Activated naive CD4-positive, alpha-beta T cell treated with anti-CD3 and anti-CD28 coated beads for 36 hours (primary cell): ENCODE measurements at regions of chr16 and their contacts with region 1.

Region 1: DNA sequence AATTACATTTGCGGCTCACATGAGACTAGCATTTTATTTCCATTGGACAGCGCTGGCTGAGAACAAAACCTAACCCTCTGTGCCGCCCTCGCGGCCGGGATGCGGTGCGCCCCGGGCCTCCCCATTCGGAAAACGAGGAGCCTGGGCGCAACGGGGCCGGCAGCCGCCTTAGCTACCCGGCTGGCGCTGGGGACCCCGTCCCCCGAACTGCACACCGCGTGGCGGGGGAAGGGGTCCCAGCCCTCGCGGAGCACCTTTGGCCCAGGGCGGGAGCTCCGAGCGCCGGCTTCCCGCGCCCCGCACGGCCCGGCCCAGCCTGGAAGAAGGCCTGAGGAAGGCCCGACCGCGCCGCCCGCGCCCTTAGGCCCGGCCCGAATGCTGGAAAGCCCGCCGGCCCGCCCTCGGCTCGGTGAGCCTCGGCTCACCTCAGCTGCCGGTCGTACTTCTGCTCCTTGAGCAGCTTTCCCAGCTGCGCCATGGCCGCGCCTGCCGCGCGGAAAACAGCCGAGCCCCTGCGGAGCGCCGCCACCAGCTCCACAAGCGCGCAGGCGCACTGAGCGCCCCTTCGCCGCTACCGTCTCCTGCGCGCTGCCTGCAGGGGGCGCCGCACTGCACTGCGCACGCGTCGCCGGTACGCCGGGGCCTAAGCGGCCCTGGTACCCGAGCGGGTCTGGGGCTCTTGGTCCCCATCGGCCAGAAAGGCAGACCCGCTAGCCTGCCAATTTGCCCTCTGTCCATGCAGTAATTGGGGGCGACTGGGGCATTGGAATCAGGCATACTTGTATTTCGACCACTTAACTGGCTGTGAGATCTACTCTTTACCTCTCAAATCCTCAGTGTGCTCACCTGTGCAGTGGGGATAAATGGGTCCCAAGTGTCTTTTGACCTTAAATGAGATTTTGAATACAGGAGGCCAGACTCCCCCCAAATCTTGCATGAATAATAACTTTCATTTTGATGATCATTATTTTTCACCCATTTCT is at the start of gene NAE1:
- DNase-seq: peak; percentile 87
- H3K4me3 Mint-ChIP-seq: peak within 1 kb of the TSS; percentile 74
- H3K27ac Mint-ChIP-seq: no peak within 1 kb of the TSS
- H3K4me1 Mint-ChIP-seq: peaks cover 32% of the 10 kb centered on the region
- H3K27me3 Mint-ChIP-seq: no peaks in the 10 kb centered on the region
- total RNA-seq, gene NAE1: 108 to 115 TPM

Region 2: GRCh38 chr16:66199189-66199588 is 631.5 kb before region 1 on chr16:
- CTCF ChIA-PET with region 1: no interaction called
- intact Hi-C with region 1: no loop called
- DNase-seq: no peak
- H3K4me3 Mint-ChIP-seq: no peak overlapping the region
- H3K27ac Mint-ChIP-seq: no peak overlapping the region
- H3K4me1 Mint-ChIP-seq: no peaks in the 10 kb centered on the region
- H3K27me3 Mint-ChIP-seq: no peaks in the 10 kb centered on the region

Region 3: GRCh38 chr16:66751303-66751991 is 79.3 kb before region 1 on chr16 and contains the start of gene DYNC1LI2:
- CTCF ChIA-PET with region 1: interaction called, 6 read pairs
- intact Hi-C with region 1: loop called (anchors 1 kb)
- DNase-seq: peak; percentile 82
- H3K4me3 Mint-ChIP-seq: peak within 1 kb of the TSS; percentile 88
- H3K27ac Mint-ChIP-seq: peak within 1 kb of the TSS; percentile 78
- H3K4me1 Mint-ChIP-seq: peaks cover 36% of the 10 kb centered on the region
- H3K27me3 Mint-ChIP-seq: peaks cover 3% of the 10 kb centered on the region
- total RNA-seq, gene DYNC1LI2: 30.8 to 31.0 TPM

Region 4: GRCh38 chr16:66844342-66845079 is 13.8 kb after region 1 on chr16 and contains the start of gene CA7:
- CTCF ChIA-PET with region 1: interaction called, 50 read pairs
- intact Hi-C with region 1: no loop called
- DNase-seq: no peak
- H3K4me3 Mint-ChIP-seq: peak within 1 kb of the TSS; percentile 39
- H3K27ac Mint-ChIP-seq: no peak within 1 kb of the TSS
- H3K4me1 Mint-ChIP-seq: peaks cover 5% of the 10 kb centered on the region
- H3K27me3 Mint-ChIP-seq: peaks cover 32% of the 10 kb centered on the region
- total RNA-seq, gene CA7: not detected

Region 5: DNA sequence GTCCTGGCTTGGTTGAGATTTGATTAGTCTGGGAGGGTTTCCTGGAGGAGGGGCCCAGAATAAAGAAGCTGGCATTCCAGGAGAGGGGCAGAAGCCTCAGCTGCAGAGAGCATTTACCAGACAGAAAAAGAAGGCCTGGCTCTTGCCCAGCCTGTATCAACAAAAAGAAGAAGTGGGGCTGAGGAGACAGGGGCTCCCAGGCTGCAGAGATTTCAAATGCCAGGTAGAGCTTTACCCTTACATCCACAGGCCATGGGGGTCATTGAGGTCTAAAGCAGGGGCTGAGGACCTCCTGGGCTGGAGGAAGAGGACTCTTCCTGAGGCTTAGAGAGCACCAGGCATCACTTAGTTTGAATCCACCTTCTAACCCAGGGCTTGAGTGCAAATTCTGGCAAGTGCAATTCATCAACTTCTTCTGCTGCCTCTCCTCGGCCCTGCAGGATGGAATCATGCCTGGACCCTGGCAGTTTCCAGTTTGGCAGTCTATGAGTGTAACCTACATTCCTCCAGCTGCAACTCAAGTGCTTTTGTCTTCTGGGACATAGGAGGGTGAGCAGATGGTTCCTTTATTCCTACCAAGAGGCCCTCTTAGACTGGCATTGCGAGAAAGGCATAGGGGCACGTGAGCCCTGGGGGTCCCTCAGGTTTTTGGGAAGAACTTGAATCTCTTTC is 28.8 kb after region 1 on chr16:
- CTCF ChIA-PET with region 1: interaction called, 19 read pairs
- intact Hi-C with region 1: no loop called
- DNase-seq: no peak
- H3K4me3 Mint-ChIP-seq: no peak overlapping the region
- H3K27ac Mint-ChIP-seq: no peak overlapping the region
- H3K4me1 Mint-ChIP-seq: no peaks in the 10 kb centered on the region
- H3K27me3 Mint-ChIP-seq: no peaks in the 10 kb centered on the region

Region 6: DNA sequence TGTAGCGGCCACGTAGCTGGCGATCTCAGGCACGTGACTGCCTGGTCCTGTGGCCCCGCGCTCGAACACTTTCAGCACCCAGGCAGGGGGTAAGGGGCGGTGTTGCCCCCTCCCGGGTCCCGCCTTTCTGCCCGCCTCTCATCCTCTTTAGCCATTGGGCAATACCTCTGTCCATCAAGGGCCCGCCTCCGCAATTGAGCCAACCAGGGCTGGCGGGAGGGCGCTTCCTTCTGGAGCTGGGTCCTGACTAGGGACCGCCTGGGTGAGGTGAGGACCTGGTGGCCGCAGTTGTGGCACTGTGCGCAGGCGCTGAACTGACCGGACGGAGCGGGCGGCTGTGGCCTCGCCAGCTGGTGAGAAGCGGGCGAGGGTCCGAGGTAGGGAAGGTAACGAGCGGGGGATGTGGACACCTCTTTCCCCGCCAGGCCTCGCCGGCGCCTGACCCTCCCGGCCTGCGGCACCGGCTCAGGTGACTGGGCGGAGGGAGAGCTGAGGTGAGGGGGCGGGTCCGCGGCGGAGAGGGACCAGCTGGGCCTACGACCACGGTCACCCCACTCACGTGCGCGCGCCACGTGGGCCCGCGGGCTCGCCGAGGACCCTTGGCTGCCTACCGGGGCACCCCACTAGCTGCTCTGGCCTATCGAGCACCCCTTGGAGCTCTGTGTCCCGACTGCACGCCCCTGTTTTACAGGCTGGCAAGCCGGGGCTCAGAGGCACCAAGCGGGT is 49.7 kb after region 1 on chr16 and contains the start of gene PDP2:
- CTCF ChIA-PET with region 1: interaction called, 21 read pairs
- intact Hi-C with region 1: no loop called
- DNase-seq: peak; percentile 96
- H3K4me3 Mint-ChIP-seq: peak within 1 kb of the TSS; percentile 97
- H3K27ac Mint-ChIP-seq: peak within 1 kb of the TSS; percentile 87
- H3K4me1 Mint-ChIP-seq: peaks cover 51% of the 10 kb centered on the region
- H3K27me3 Mint-ChIP-seq: no peaks in the 10 kb centered on the region
- total RNA-seq, gene PDP2: 18.8 to 20.6 TPM

Region 7: DNA sequence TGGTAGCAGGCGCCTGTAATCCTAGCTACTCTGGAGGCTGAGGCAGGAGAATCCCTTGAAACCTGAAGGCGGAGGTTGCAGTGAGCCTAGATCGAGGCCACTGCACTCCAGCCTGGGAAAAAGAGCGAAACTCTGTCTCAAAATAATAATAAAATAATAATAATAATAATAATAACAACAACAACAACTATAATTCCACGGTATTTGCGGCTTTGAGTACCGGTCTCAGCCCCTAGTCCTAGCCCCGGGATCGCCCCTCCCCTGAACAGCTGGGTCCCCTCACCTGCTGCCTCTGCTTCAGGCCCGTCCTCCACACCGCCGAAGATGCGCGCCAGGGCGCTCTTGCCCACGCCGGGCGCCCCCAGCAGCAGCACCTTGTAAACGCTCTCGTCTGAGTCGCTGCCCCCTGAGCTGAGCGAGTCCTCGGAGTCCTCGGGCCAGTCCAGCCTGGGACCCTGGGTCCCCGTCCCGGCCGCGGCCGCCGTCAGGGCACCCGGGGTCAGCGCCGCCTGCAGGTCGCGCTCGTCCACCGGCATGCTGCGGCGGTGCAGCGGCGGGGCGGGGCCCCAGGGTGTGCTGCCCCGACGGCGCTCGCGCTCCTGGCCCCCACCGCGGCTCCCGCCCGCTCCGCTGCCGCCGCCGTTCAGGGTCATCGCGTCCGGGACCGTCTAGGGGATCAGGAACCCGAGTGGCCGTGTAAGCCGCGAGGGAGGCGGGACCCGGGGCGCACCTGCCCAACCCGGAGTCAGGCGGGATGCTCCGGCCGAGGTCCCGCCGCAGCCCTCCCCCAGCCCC is 94.0 kb after region 1 on chr16:
- CTCF ChIA-PET with region 1: interaction called, 3 read pairs
- intact Hi-C with region 1: loop called (anchors 2 kb)
- DNase-seq: peak; percentile 42
- H3K4me3 Mint-ChIP-seq: peak overlapping the region; percentile 66
- H3K27ac Mint-ChIP-seq: no peak overlapping the region
- H3K4me1 Mint-ChIP-seq: peaks cover 10% of the 10 kb centered on the region
- H3K27me3 Mint-ChIP-seq: peaks cover 24% of the 10 kb centered on the region